ENCODE measurements at regions of chr9 and their contacts with region 1.

Region 1: DNA sequence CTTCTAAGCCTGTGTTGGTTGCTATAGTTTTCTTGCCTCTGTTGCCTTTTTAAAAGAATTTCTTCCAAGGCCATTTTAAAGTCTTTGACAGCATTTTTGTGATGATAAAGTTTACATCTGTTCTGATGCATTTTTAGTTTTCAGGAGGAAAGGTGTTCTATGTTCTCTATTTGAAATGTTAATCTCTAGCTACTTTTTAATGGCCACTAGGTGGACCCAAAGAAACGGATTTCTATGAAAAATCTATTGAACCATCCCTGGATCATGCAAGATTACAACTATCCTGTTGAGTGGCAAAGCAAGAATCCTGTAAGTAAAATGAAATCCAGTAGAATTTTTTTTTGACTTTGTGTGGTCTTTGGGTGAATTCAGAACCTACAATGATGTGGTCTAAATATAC is 60.2 kb downstream of the MELK start:
- DNase-seq: no peak
- H3K4me3 Mint-ChIP-seq: no peak overlapping the region
- H3K27ac Mint-ChIP-seq: no peak overlapping the region
- H3K4me1 Mint-ChIP-seq: no peaks in the 10 kb centered on the region
- H3K27me3 Mint-ChIP-seq: no peaks in the 10 kb centered on the region

Region 2: GRCh38 chr9:36728651-36729520 is 96.0 kb after region 1 on chr9:
- CTCF ChIA-PET with region 1: interaction called, 64 read pairs
- POLR2A ChIA-PET with region 1: interaction called, 5 read pairs
- intact Hi-C with region 1: loop called (anchors 2 kb)
- DNase-seq: peak; percentile 81
- H3K4me3 Mint-ChIP-seq: no peak overlapping the region
- H3K27ac Mint-ChIP-seq: no peak overlapping the region
- H3K4me1 Mint-ChIP-seq: no peaks in the 10 kb centered on the region
- H3K27me3 Mint-ChIP-seq: no peaks in the 10 kb centered on the region